Esophagus muscularis mucosa (tissue), 4 donors: ENCODE measurements at regions of chr9 and their contacts with region 1.

Region 1: GRCh38 chr9:7520396-7520795 is 279.2 kb downstream of the DMAC1 start:
- DNase-seq: no peak
- H3K4me3 ChIP-seq: no peak overlapping the region
- H3K27ac ChIP-seq: no peak overlapping the region
- H3K4me1 ChIP-seq: no peaks in the 10 kb centered on the region
- H3K27me3 ChIP-seq: no peaks in the 10 kb centered on the region
- CTCF ChIP-seq: no peak
- EP300 ChIP-seq: no peak
- POLR2A ChIP-seq: no peak

Region 2: DNA sequence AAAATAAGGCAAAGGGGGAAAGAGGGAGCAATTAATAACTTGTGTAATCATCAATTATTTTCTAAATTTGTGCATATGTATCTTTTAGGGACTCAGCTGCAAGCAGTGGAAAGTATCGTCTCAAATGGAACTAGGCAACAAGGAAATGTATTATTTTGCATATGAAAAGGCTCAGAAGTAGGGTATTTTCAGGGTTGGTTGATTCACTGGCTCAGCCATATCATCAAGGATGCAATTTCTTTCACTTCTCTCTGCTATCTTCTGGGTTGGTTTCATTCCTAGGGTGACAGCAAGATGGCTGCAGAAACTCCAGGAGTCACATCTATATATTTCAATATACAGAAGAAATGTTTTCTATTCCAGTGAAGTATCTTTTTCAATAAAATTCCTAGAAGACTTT is 230.6 kb before region 1 on chr9:
- intact Hi-C with region 1: no loop called
- DNase-seq: no peak
- H3K4me3 ChIP-seq: no peak overlapping the region
- H3K27ac ChIP-seq: no peak overlapping the region
- H3K4me1 ChIP-seq: no peaks in the 10 kb centered on the region
- H3K27me3 ChIP-seq: no peaks in the 10 kb centered on the region
- CTCF ChIP-seq: no peak
- EP300 ChIP-seq: no peak
- POLR2A ChIP-seq: no peak

Region 3: GRCh38 chr9:8189881-8190280 is 669.5 kb after region 1 on chr9:
- intact Hi-C with region 1: loop called (anchors 10 kb)
- DNase-seq: no peak
- H3K4me3 ChIP-seq: no peak overlapping the region
- H3K27ac ChIP-seq: no peak overlapping the region
- H3K4me1 ChIP-seq: no peaks in the 10 kb centered on the region
- H3K27me3 ChIP-seq: no peaks in the 10 kb centered on the region
- CTCF ChIP-seq: no peak
- EP300 ChIP-seq: no peak
- POLR2A ChIP-seq: no peak